CD14-positive monocyte (primary cell): ENCODE measurements at regions of chr20 and their contacts with region 1.

Region 1: DNA sequence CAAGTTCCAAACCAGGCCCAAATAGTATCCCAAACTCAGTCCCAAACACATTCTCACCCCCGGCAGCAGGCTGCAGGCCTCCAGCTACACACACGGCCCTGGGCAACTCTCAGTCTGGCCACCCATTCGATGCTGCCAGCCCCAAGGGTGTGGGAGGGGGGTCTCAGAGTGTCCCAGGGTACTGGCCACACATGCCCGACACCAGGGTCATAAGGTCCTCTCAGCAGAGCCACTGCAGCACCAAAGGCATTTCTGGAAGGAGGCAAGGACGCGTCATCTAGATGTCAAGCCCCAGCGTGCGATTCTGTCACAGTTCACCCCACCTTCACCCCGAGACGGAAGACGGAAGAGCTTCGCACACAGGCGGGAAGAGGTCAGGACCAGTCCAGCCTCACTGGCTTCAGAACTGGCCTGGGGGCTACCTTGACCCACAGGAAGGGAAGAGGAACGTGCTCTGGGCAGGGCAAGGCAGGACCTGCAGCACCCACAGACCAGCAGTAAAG is 9.5 kb downstream of the MYL9 start:
- DNase-seq: no peak
- H3K4me3 ChIP-seq: no peak overlapping the region
- H3K4me3 Mint-ChIP-seq: no peak overlapping the region
- H3K27ac ChIP-seq: no peak overlapping the region
- H3K27ac Mint-ChIP-seq: peak overlapping the region in 3 of 7 donors; percentile 4 to 78 (median 11)
- H3K4me1 ChIP-seq: no peaks in the 10 kb centered on the region
- H3K4me1 Mint-ChIP-seq: no peaks in the 10 kb centered on the region
- H3K27me3 ChIP-seq: no peaks in the 10 kb centered on the region
- H3K27me3 Mint-ChIP-seq: peaks cover 0 to 3% (median 1%) of the 10 kb centered on the region in 3 donors
- CTCF ChIP-seq: no peak

Region 2: GRCh38 chr20:36591854-36592641 is 41.2 kb after region 1 on chr20:
- intact Hi-C with region 1: loop called (anchors 5 kb)
- DNase-seq: no peak
- H3K4me3 ChIP-seq: no peak overlapping the region
- H3K4me3 Mint-ChIP-seq: no peak overlapping the region
- H3K27ac ChIP-seq: no peak overlapping the region
- H3K27ac Mint-ChIP-seq: peak overlapping the region in 4 of 7 donors; percentile 40 to 63 (median 52)
- H3K4me1 ChIP-seq: peaks cover 66 to 69% of the 10 kb centered on the region in 2 donors
- H3K4me1 Mint-ChIP-seq: peaks cover 70% of the 10 kb centered on the region
- H3K27me3 ChIP-seq: no peaks in the 10 kb centered on the region
- H3K27me3 Mint-ChIP-seq: no peaks in the 10 kb centered on the region
- CTCF ChIP-seq: no peak

Region 3: DNA sequence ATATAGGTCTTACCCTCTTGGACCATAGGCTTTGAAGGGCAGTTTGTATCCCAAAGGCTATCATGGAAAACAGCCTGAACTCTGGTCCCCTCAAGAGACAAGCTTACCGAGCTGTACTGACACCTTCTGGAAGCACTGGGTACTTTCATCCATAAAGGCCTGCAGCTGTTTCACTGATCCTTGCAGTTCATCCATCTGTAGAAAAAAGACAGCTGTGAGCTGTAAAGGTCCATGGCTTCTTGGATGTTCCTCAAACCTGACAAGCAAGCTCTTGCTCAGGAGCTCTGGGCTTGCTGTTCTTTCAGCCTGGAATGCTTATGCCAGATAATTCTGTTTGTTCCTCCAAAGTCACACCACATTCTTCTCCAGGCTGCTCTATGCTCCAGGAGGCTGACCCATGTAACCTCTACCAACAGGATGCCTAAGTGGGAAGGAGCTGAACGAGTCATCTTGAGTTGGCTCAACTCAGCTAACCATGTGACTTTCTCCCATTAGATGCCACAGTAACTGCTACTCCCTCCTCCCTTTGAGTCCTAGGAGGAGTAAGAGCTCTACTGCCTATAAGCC is 203.9 kb after region 1 on chr20:
- intact Hi-C with region 1: loop called in 1 of 2 experiments (anchors 10 kb)
- DNase-seq: peak; percentile 37 to 58 (median 51)
- H3K4me3 ChIP-seq: no peak overlapping the region
- H3K4me3 Mint-ChIP-seq: no peak overlapping the region
- H3K27ac ChIP-seq: peak overlapping the region in 1 of 2 donors; percentile 27
- H3K27ac Mint-ChIP-seq: peak overlapping the region in 3 of 7 donors; percentile 30 to 56 (median 53)
- H3K4me1 ChIP-seq: peaks cover 22 to 27% of the 10 kb centered on the region in 2 donors
- H3K4me1 Mint-ChIP-seq: peaks cover 30% of the 10 kb centered on the region
- H3K27me3 ChIP-seq: no peaks in the 10 kb centered on the region
- H3K27me3 Mint-ChIP-seq: no peaks in the 10 kb centered on the region
- CTCF ChIP-seq: peak; percentile 78